PC-3 (cell line): ENCODE measurements at regions of chr5 and their contacts with region 1.

Region 1: GRCh38 chr5:37703841-37704241 is 136.0 kb downstream of the GDNF start:
- DNase-seq: peak; percentile 78
- ATAC-seq: peak; percentile 92
- H3K4me3 ChIP-seq: no peak overlapping the region
- H3K27ac ChIP-seq: peak overlapping the region; percentile 34
- H3K4me1 ChIP-seq: peaks cover 20% of the 10 kb centered on the region
- H3K27me3 ChIP-seq: no peaks in the 10 kb centered on the region
- CTCF ChIP-seq: no peak

Region 2: DNA sequence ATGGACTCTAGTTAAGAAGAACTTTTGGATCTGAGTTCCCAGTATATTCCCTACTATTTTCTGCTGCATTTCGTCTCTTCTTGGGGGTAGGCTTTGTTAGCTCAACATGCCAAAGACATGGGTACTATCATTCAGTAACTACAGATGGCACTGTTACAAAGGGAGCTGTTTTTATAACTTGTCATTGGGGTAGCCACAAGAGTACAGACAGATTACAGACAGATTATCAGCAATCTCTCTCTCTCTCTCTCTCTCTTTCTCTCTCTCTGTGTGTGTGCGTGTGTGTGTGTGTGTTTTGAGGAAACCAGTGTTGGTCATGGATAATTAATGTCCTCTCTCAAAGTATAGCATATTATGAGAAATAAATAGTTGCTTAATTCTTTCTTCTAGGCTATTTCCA is 208.6 kb before region 1 on chr5:
- CTCF ChIA-PET with region 1: no interaction called
- POLR2A ChIA-PET with region 1: no interaction called
- intact Hi-C with region 1: loop called (anchors 5 kb)
- DNase-seq: peak; percentile 56
- ATAC-seq: peak; percentile 41
- H3K4me3 ChIP-seq: no peak overlapping the region
- H3K27ac ChIP-seq: peak overlapping the region; percentile 65
- H3K4me1 ChIP-seq: peaks cover 21% of the 10 kb centered on the region
- H3K27me3 ChIP-seq: no peaks in the 10 kb centered on the region
- CTCF ChIP-seq: peak; percentile 56

Region 3: GRCh38 chr5:37751227-37751626 is 47.4 kb after region 1 on chr5:
- CTCF ChIA-PET with region 1: no interaction called
- POLR2A ChIA-PET with region 1: no interaction called
- intact Hi-C with region 1: loop called (anchors 1 kb)
- DNase-seq: peak; percentile 73
- ATAC-seq: peak; percentile 100
- H3K4me3 ChIP-seq: no peak overlapping the region
- H3K27ac ChIP-seq: no peak overlapping the region
- H3K4me1 ChIP-seq: peaks cover 24% of the 10 kb centered on the region
- H3K27me3 ChIP-seq: no peaks in the 10 kb centered on the region
- CTCF ChIP-seq: no peak